GM10248 (cell line): ENCODE measurements at regions of chr10 and their contacts with region 1.

Region 1: DNA sequence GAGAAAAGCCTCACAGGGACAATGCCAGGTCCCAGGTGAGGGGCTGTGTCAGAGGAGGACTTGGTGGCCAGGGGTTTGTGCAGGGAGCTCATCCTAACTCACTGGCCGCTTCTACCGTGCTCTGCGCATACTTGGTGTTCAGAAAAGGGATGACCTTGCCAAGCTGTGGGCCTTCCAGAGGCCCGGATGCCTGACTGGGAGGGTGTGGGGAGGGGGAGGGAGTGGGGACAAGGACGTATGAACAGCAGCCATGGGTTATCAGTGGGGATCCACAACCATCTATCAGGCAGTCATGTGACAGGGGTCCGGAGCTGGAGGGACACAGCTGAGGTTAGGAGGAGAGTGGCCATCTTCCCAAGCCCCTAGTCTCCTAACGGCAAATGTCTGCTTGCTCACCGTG is 6.2 kb downstream of the SFXN4 start:
- DNase-seq: no peak
- CTCF ChIP-seq: no peak

Region 2: DNA sequence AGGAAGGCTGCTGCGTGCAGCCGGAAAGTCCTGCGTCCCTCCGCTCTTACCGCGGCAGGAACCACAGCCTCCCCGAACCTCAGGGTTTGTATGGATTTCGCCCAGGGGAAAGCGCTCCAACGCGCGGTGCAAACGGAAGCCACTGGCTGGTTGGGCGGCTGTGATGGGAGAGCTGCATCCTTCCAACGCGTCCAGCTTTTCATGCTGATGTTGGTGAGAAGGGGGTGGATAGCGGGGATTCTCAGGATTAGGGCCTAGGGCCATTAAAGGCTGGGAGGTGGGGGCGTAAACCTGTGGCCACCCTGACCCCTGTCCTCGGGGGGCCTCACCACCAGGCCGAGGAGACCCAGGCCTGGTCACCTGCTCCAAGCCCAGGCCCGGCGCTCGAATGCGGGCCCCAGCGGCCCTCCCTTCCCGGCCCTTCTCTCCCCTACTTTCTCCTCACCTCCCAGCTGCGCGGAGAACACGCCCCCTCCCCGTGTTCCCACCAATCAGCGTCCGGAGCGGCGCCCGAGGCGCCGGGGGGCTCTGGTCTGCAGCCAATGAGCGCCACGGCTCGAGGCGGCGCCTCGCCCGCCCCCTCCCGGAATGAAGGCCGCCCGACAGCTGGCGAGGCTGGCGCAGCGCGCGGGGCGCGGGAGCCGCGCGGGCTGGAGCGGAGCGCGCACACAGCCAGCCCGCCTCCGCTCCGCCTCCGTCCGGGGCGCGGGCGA is 130.3 kb before region 1 on chr10:
- CTCF ChIA-PET with region 1: no interaction called
- POLR2A ChIA-PET with region 1: no interaction called
- DNase-seq: peak; percentile 94
- CTCF ChIP-seq: no peak

Region 3: GRCh38 chr10:119149157-119149556 is 10.2 kb before region 1 on chr10:
- CTCF ChIA-PET with region 1: interaction called, 10 read pairs
- POLR2A ChIA-PET with region 1: no interaction called
- DNase-seq: no peak
- CTCF ChIP-seq: no peak